IMR-90 (cell line): ENCODE measurements at regions of chr15 and their contacts with region 1.

Region 1: DNA sequence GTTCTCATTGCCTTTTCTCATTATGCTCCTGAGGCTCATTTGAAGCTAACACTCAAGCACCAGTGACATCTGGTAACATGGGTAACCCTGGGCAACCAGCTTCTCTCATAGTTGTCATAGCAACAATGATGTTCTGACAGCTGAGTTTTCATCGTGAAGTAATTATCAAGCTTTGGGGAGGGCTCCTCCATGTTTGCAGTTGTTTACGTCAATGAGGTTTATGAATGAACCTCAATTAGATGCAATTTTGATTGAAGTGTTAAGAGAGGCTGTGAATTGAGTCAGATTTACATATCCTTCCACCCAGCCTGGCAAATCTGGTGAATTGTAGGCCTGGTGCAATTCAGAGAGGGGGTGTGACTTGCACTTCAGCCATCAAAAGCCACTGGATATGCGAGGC is 119.3 kb upstream of the CHD2 start:
- DNase-seq: no peak
- ATAC-seq: no peak
- H3K4me3 ChIP-seq: no peak overlapping the region
- H3K27ac ChIP-seq: no peak overlapping the region
- H3K4me1 ChIP-seq: no peaks in the 10 kb centered on the region
- H3K27me3 ChIP-seq: no peaks in the 10 kb centered on the region
- CTCF ChIP-seq: no peak
- POLR2A ChIP-seq: no peak
- RAD21 ChIP-seq: no peak

Region 2: GRCh38 chr15:90986807-90987507 is 1793.9 kb before region 1 on chr15:
- CTCF ChIA-PET with region 1: no interaction called
- POLR2A ChIA-PET with region 1: interaction called, 14 read pairs
- dilution Hi-C with region 1: no loop called
- in situ Hi-C with region 1: no loop called
- intact Hi-C with region 1: no loop called
- DNase-seq: no peak
- ATAC-seq: no peak
- H3K4me3 ChIP-seq: no peak overlapping the region
- H3K27ac ChIP-seq: no peak overlapping the region
- H3K4me1 ChIP-seq: peaks cover 11% of the 10 kb centered on the region
- H3K27me3 ChIP-seq: no peaks in the 10 kb centered on the region
- CTCF ChIP-seq: no peak
- POLR2A ChIP-seq: no peak
- RAD21 ChIP-seq: no peak

Region 3: GRCh38 chr15:92413510-92413909 is 367.3 kb before region 1 on chr15:
- CTCF ChIA-PET with region 1: no interaction called
- POLR2A ChIA-PET with region 1: no interaction called
- dilution Hi-C with region 1: no loop called
- in situ Hi-C with region 1: no loop called
- intact Hi-C with region 1: no loop called
- DNase-seq: no peak
- ATAC-seq: no peak
- H3K4me3 ChIP-seq: no peak overlapping the region
- H3K27ac ChIP-seq: no peak overlapping the region
- H3K4me1 ChIP-seq: no peaks in the 10 kb centered on the region
- H3K27me3 ChIP-seq: no peaks in the 10 kb centered on the region
- CTCF ChIP-seq: no peak
- POLR2A ChIP-seq: no peak
- RAD21 ChIP-seq: no peak